Posterior vena cava (tissue), 2 donors: ENCODE measurements at regions of chr15 and their contacts with region 1.

Region 1: DNA sequence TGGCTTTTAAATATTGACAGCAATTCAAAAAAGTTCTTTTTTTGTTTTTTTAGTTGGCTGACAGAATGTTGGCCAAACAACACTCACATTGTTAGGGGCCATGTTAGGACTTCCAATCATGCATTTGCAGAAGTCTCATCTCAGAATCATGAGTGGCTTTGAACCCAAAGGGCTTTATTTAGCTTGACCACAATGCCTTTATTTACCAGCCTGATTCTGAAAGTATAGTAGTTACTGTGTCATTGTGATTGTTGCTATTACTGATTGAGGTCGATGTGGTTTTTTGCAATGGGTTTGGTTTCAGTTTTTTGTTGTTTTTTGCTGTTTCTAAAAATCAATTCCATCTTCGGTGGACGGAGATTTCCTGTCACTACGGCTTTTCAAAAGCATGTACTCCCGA is 7.2 kb downstream of the GLDN start:
- DNase-seq: no peak

Region 2: GRCh38 chr15:51315721-51316120 is 33.0 kb before region 1 on chr15:
- intact Hi-C with region 1: loop called in 1 of 2 experiments (anchors 1 kb)
- DNase-seq: no peak